Activated CD4-positive, alpha-beta memory T cell treated with anti-CD3 and anti-CD28 coated beads for 36 hours (primary cell): ENCODE measurements at regions of chr14 and their contacts with region 1.

Region 1: GRCh38 chr14:69611201-69612011 is at the start of gene SUSD6:
- DNase-seq: peak; percentile 93
- H3K4me3 Mint-ChIP-seq: peak within 1 kb of the TSS; percentile 97
- H3K27ac Mint-ChIP-seq: peak within 1 kb of the TSS; percentile 98
- H3K4me1 Mint-ChIP-seq: peaks cover 51% of the 10 kb centered on the region
- H3K27me3 Mint-ChIP-seq: no peaks in the 10 kb centered on the region
- total RNA-seq, gene SUSD6: 69.9 to 72.2 TPM

Region 2: GRCh38 chr14:69153131-69153872 is 458.1 kb before region 1 on chr14:
- CTCF ChIA-PET with region 1: no interaction called
- POLR2A ChIA-PET with region 1: no interaction called
- intact Hi-C with region 1: loop called (anchors 5 kb)
- DNase-seq: peak; percentile 96
- H3K4me3 Mint-ChIP-seq: peak overlapping the region; percentile 91
- H3K27ac Mint-ChIP-seq: peak overlapping the region; percentile 92
- H3K4me1 Mint-ChIP-seq: peaks cover 33% of the 10 kb centered on the region
- H3K27me3 Mint-ChIP-seq: no peaks in the 10 kb centered on the region

Region 3: DNA sequence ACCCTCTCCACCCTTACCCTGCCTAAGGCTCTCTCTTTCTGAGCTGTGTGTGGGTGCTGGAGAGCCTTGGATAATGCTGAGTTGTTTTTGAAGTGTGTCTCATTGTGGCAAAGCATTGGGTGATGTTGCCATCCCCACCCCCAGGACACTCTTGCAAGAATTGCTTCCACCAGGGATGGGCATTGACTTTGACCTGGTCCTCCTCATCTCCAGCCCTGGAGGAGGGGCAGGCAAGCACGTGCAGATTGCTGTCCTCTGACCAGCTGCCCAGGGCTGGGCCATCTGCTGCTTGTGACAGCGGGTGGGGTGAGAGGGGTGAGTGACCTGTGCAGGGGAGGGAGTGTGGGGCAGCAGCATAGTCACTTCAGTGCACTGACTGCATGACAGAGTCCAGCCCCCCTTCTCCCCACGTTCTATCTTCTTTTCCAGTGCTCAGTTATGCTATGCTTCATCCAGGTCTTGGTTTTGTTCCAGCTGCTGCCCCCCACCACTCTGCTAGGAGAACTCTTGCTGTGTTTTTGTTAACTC is 26.2 kb after region 1 on chr14:
- CTCF ChIA-PET with region 1: interaction called, 8 read pairs
- POLR2A ChIA-PET with region 1: interaction called, 17 read pairs
- intact Hi-C with region 1: no loop called
- DNase-seq: peak; percentile 58
- H3K4me3 Mint-ChIP-seq: peak overlapping the region; percentile 54
- H3K27ac Mint-ChIP-seq: peak overlapping the region; percentile 94
- H3K4me1 Mint-ChIP-seq: peaks cover 92% of the 10 kb centered on the region
- H3K27me3 Mint-ChIP-seq: no peaks in the 10 kb centered on the region

Region 4: GRCh38 chr14:69685716-69686115 is 74.3 kb after region 1 on chr14:
- CTCF ChIA-PET with region 1: interaction called, 16 read pairs
- POLR2A ChIA-PET with region 1: interaction called, 25 read pairs
- intact Hi-C with region 1: loop called (anchors 2 kb)
- DNase-seq: peak; percentile 80
- H3K4me3 Mint-ChIP-seq: peak overlapping the region; percentile 57
- H3K27ac Mint-ChIP-seq: peak overlapping the region; percentile 96
- H3K4me1 Mint-ChIP-seq: peaks cover 83% of the 10 kb centered on the region
- H3K27me3 Mint-ChIP-seq: no peaks in the 10 kb centered on the region

Region 5: DNA sequence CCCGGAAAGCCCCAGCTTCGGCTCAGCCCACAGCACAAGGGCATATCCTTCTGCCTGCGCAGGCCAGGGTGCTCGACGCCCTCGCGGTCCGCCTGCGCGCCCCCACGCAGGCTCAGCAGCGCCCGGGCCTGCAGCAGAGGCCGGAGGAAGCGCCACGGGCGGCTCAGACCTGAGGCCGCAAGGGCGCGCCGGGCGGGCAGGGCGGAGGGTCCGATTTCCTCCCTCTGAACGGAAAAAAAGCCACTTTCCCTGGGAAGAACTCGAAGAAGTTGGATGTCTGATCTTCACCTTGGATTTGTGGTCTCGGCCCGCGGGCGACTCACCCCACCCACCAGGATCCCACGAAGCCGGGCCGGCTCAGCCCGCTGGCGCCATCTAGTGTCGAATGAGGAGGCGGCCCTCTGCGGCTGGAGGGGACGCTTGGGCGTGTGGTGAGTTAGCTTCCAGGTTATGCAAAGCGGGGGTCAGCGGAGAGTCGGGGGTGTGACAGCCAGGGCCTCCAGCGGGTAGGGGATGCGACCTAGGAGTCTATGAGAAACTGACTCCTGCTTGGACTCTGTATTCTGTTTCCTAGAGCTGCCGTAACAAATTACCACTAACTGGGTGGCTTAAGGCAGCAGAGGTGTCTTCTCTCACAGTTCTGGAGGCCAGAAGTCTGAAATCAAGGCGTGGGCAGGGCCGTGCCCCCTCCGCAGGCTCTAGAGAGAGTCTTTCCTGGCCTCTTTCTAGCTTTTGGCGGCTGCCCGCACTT is 115.5 kb after region 1 on chr14:
- CTCF ChIA-PET with region 1: interaction called, 69 read pairs
- POLR2A ChIA-PET with region 1: no interaction called
- intact Hi-C with region 1: no loop called
- DNase-seq: peak; percentile 88
- H3K4me3 Mint-ChIP-seq: peak overlapping the region; percentile 60
- H3K27ac Mint-ChIP-seq: no peak overlapping the region
- H3K4me1 Mint-ChIP-seq: peaks cover 15% of the 10 kb centered on the region
- H3K27me3 Mint-ChIP-seq: no peaks in the 10 kb centered on the region

Region 6: DNA sequence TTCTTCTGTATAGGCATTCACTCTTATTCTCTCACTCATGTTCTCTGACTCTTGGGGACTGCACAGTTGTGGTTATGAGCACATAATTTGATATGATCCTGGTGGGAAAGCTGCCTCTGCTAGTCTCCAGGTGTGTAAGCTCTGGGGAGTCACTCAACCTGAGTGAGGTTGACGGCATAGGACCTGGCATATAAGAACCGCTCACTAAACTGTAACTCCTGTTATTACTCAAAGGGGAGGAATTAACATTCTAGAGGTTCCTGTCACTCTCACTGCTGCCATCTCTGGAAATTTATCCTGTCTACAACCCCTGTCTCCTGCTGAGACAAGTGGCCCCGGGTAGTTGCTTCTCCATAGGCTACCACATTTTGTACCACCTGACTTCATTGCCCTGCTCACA is 169.5 kb after region 1 on chr14:
- CTCF ChIA-PET with region 1: no interaction called
- POLR2A ChIA-PET with region 1: no interaction called
- intact Hi-C with region 1: no loop called
- DNase-seq: no peak
- H3K4me3 Mint-ChIP-seq: no peak overlapping the region
- H3K27ac Mint-ChIP-seq: peak overlapping the region; percentile 2
- H3K4me1 Mint-ChIP-seq: peaks cover 33% of the 10 kb centered on the region
- H3K27me3 Mint-ChIP-seq: no peaks in the 10 kb centered on the region

Region 7: GRCh38 chr14:69972755-69973154 is 361.3 kb after region 1 on chr14:
- CTCF ChIA-PET with region 1: no interaction called
- POLR2A ChIA-PET with region 1: no interaction called
- intact Hi-C with region 1: no loop called
- DNase-seq: no peak
- H3K4me3 Mint-ChIP-seq: no peak overlapping the region
- H3K27ac Mint-ChIP-seq: no peak overlapping the region
- H3K4me1 Mint-ChIP-seq: no peaks in the 10 kb centered on the region
- H3K27me3 Mint-ChIP-seq: peaks cover 12% of the 10 kb centered on the region

Region 8: GRCh38 chr14:70640938-70641547 is 1029.6 kb after region 1 on chr14:
- CTCF ChIA-PET with region 1: no interaction called
- POLR2A ChIA-PET with region 1: no interaction called
- intact Hi-C with region 1: loop called (anchors 10 kb)
- DNase-seq: peak; percentile 79
- H3K4me3 Mint-ChIP-seq: peak overlapping the region; percentile 89
- H3K27ac Mint-ChIP-seq: peak overlapping the region; percentile 92
- H3K4me1 Mint-ChIP-seq: peaks cover 44% of the 10 kb centered on the region
- H3K27me3 Mint-ChIP-seq: no peaks in the 10 kb centered on the region